Ovary (tissue), 10 donors: ENCODE measurements at regions of chr3 and their contacts with region 1.

Region 1: GRCh38 chr3:117150628-117151027 is 441.0 kb downstream of the TUSC7 start:
- DNase-seq: no peak
- H3K4me3 ChIP-seq: no peak overlapping the region
- H3K27ac ChIP-seq: no peak overlapping the region
- H3K4me1 ChIP-seq: no peaks in the 10 kb centered on the region
- H3K27me3 ChIP-seq: no peaks in the 10 kb centered on the region
- CTCF ChIP-seq: no peak
- EP300 ChIP-seq: no peak
- POLR2A ChIP-seq: no peak

Region 2: GRCh38 chr3:117091676-117092075 is 59.0 kb before region 1 on chr3:
- intact Hi-C with region 1: no loop called
- DNase-seq: no peak
- H3K4me3 ChIP-seq: no peak overlapping the region
- H3K27ac ChIP-seq: no peak overlapping the region
- H3K4me1 ChIP-seq: no peaks in the 10 kb centered on the region
- H3K27me3 ChIP-seq: no peaks in the 10 kb centered on the region
- CTCF ChIP-seq: no peak
- EP300 ChIP-seq: no peak
- POLR2A ChIP-seq: no peak

Region 3: DNA sequence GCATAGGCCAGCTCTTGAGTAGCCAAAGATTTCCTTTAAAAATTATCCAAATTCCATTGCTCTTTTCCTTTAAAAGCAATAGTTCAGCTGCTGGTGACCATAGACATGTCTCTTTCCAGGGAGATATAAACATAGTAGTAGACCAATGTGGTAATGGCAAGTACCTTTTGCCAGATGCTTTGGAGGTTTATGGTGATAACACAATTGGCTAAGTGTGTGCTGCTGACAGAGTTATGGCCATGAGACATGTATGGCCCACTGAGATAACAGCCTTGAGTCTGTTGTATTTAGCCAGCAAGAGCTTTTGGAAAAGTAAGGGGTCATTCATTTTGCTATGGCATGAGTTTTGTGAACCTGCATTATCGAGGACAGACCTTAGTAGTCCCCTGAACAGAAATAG is 705.7 kb after region 1 on chr3:
- intact Hi-C with region 1: loop called in 1 of 4 experiments (anchors 5 kb)
- DNase-seq: no peak
- H3K4me3 ChIP-seq: no peak overlapping the region
- H3K27ac ChIP-seq: no peak overlapping the region
- H3K4me1 ChIP-seq: no peaks in the 10 kb centered on the region
- H3K27me3 ChIP-seq: no peaks in the 10 kb centered on the region
- CTCF ChIP-seq: no peak
- EP300 ChIP-seq: no peak
- POLR2A ChIP-seq: no peak